CD4-positive, alpha-beta T cell (primary cell): ENCODE measurements at regions of chrX and their contacts with region 1.

Region 1: DNA sequence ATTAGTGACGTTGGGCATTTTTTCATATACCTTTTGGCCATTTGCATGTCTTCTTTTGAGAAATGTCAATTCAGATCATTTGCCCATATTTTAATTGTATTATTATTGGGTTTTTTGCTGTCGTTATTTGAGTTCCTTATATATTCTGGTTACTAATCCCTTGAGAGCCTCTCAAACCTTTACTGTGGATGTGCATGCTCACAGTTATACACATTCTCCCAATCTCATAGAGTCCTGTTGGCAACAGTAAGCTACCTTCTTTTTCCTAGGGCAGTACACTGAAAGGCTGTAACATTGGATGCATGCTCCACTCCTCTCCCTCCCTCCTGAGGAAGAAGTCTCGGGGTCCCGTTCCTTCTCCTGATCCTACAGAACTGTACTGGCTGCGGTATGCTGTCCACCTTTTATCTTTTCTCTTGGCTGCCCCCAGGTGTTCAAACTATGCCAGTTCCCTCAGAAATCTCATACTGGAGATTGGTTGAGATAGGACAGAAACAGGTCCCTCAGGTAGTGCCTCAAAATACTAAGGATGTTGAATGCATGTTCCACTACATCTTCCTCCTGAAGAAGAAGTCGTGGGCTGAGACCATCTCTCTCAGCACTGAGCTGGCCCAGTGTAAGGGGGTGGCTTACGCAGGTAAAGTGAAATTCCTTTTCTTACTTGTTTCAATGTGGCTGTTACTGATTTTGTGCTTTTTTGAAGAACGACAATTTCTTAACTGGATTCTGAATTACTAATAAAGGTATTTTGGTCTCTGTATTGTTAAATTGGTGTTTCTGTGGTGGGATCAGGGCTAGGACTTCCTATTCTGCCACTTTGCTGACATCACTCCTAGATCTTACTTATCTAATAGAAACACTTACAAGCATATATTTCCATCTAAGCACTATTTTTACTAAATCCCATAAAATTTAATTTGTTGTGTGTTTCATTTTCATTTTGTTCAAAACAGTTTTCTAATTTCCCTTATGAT is 145.4 kb upstream of the HUWE1 start:
- DNase-seq: peak; percentile 1 to 62 (median 15)
- ATAC-seq: peak; percentile 84
- H3K4me3 ChIP-seq: no peak overlapping the region
- H3K4me3 Mint-ChIP-seq: no peak overlapping the region
- H3K27ac ChIP-seq: no peak overlapping the region
- H3K27ac Mint-ChIP-seq: no peak overlapping the region
- H3K4me1 ChIP-seq: peaks cover 5% of the 10 kb centered on the region
- H3K4me1 Mint-ChIP-seq: no peaks in the 10 kb centered on the region
- H3K27me3 ChIP-seq: no peaks in the 10 kb centered on the region
- H3K27me3 Mint-ChIP-seq: no peaks in the 10 kb centered on the region
- CTCF ChIP-seq: peak; percentile 43

Region 2: GRCh38 chrX:53678667-53679066 is 153.3 kb before region 1 on chrX:
- CTCF ChIA-PET with region 1: interaction called, 3 read pairs
- POLR2A ChIA-PET with region 1: interaction called, 3 read pairs
- intact Hi-C with region 1: loop called (anchors 1 to 5 kb)
- DNase-seq: peak in 3 of 14 experiments; percentile 39 to 61 (median 56)
- ATAC-seq: no peak
- H3K4me3 ChIP-seq: no peak overlapping the region
- H3K4me3 Mint-ChIP-seq: peak overlapping the region; percentile 60
- H3K27ac ChIP-seq: no peak overlapping the region
- H3K27ac Mint-ChIP-seq: no peak overlapping the region
- H3K4me1 ChIP-seq: peaks cover 15% of the 10 kb centered on the region
- H3K4me1 Mint-ChIP-seq: peaks cover 71% of the 10 kb centered on the region
- H3K27me3 ChIP-seq: no peaks in the 10 kb centered on the region
- H3K27me3 Mint-ChIP-seq: no peaks in the 10 kb centered on the region
- CTCF ChIP-seq: no peak

Region 3: DNA sequence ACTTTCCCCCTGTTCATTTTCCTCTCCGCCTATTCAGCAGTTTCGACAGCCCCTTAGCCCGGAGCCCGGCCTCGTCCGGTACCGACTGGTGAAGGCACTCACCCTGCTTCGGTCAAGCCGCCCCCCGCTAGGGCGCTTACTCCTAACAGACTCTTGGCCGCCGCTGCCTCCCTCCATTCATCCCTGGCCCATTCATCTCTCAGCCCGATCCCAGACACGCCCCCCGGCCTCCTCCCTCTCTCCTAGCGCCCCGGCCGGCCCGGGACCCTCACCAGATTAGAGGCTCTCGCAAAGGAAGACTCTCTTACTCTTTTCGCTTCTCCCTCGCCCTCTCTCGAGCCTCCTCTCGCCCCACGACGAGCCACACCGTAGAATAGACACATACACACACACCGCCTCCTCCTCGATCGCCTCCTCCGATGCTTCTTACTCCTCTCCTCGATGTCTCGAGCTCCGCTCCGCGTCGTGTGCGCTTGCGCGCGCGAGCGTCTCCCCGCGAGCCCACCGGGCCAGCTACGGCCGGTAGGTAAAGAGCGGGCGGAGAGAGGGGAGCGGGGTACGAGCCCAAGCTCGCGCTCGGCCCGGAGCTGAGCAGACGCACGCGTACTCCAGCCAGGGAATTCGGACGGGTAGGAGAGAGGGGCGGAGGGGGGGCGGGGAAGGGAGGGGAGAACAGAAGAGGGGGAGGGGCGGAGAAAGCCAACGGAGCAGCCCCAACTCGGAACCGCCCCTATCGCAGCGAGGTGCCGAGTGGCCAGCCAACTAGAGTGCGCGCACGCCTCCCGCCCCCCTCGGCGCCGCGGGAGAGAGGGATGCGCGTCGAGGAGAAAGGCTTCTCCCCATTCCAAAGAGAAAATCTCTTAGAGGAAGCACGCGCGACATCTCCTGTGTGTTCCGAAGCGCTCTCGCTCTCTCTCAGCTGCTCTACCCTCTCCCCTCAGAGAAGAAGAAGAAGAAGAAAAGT is 525.7 kb after region 1 on chrX and contains the start of gene WNK3:
- CTCF ChIA-PET with region 1: no interaction called
- POLR2A ChIA-PET with region 1: no interaction called
- intact Hi-C with region 1: no loop called
- DNase-seq: peak; percentile 2 to 64 (median 28)
- ATAC-seq: peak; percentile 62
- H3K4me3 ChIP-seq: peak within 1 kb of the TSS; percentile 50
- H3K4me3 Mint-ChIP-seq: peak within 1 kb of the TSS; percentile 88
- H3K27ac ChIP-seq: no peak within 1 kb of the TSS
- H3K27ac Mint-ChIP-seq: peak within 1 kb of the TSS; percentile 10
- H3K4me1 ChIP-seq: peaks cover 20% of the 10 kb centered on the region
- H3K4me1 Mint-ChIP-seq: peaks cover 21% of the 10 kb centered on the region
- H3K27me3 ChIP-seq: peaks cover 4 to 13% of the 10 kb centered on the region in 2 experiments
- H3K27me3 Mint-ChIP-seq: peaks cover 40% of the 10 kb centered on the region
- CTCF ChIP-seq: no peak
- total RNA-seq, gene WNK3: 0.16 to 0.25 TPM